OCI-LY7 (cell line): ENCODE measurements at regions of chr12 and their contacts with region 1.

Region 1: GRCh38 chr12:113221181-113221997 is at the start of gene TPCN1:
- DNase-seq: peak; percentile 100
- H3K4me3 ChIP-seq: peak within 1 kb of the TSS; percentile 100
- H3K27ac ChIP-seq: peak within 1 kb of the TSS; percentile 99
- H3K4me1 ChIP-seq: peaks cover 47% of the 10 kb centered on the region
- CTCF ChIP-seq: no peak
- total RNA-seq, gene TPCN1: 72.4 and 96.0 TPM in 2 replicates

Region 2: DNA sequence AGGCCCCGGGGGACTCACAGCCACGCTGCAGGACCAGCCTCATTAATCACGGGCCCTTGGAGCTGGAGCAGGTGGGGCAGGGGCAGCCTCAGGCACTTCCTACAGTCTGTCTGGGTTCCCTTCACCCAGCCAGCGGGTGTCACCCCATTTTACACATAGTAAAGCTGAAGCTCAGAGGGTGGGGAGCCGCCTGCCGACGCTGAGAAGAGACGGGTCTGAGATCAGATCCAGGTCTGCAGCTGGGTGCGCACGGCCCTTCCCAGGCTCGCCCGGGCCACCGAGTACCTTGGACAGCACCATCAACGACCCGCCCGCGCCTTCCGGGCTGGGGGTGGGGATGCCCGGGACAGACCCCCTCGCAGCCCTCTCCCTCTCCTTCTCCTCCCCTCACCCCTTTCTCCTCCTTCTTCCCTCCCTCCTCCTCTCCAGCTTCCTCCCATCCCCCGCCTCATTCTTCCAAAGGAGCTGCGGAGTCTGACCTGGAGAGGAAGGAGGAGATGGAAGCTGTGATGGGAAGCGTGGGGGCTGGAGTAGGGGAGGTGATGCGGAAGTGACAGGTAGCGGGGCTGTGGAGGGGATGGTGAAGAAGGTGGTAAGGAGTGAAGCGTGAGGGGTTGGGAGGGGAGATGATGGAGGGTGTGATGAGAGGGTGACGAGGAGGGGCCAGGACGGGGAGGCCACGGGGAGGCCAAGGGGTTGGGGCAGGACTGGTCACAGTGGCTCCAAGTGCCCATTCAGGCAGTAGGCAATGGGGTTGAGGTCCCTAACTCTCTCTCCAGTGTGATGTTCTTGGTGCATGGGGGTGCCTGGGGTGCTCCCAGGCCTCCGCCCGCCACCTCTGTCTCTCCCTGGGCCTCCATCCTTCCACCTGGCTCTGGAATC is 156.0 kb before region 1 on chr12:
- CTCF ChIA-PET with region 1: no interaction called
- POLR2A ChIA-PET with region 1: no interaction called
- intact Hi-C with region 1: loop called (anchors 5 kb)
- DNase-seq: peak; percentile 71
- H3K4me3 ChIP-seq: peak overlapping the region; percentile 90
- H3K27ac ChIP-seq: peak overlapping the region; percentile 97
- H3K4me1 ChIP-seq: peaks cover 100% of the 10 kb centered on the region
- CTCF ChIP-seq: no peak

Region 3: DNA sequence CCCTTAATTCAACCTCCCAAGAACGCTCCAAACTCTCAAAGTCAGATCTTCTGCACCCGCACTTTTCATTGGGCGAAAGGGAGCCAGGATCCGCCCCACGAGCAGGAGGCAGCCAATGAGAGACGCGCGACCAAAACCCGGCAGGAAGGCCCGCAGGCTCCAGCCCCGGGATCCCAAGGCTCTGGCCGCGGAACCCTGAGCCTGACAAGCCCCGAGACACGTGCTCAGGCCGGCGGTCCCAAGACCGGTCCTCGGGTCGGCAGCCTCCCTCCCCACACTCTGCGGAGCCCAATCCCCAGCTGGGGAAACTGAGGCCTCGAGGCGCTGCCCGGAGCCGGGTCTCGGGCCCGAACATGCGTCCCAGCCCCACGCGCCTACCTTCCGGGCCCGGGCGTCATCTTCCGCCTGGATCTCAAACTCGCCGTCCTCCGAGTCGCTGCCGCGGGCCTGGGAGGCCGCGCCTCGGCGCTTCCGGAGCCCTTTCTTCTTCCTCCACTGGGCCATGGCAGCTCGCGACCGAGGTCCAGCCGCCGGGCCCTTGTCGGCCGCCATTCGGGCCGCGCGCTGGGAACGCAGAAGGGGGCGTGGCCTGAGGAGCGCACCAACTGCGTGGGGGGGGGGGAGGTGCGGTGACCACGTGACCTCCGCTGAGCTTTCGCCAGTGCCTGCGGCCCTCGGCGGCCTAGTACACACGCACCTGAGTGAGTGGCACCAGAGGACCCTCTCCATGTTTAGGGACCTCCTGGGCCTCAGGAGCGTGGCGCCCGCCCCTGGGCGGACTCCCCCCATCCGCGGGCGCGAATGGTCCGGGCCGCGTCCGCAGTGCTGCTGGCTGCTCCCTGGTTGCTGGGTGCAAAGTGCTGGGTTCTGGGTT is 36.3 kb before region 1 on chr12 and contains the starts of genes DDX54 and RITA1:
- CTCF ChIA-PET with region 1: no interaction called
- POLR2A ChIA-PET with region 1: interaction called, 24 read pairs
- intact Hi-C with region 1: loop called (anchors 1 kb)
- DNase-seq: peak; percentile 95
- H3K4me3 ChIP-seq: peak within 1 kb of the TSS; percentile 92
- H3K27ac ChIP-seq: peak within 1 kb of the TSS; percentile 86
- H3K4me1 ChIP-seq: peaks cover 44% of the 10 kb centered on the region
- CTCF ChIP-seq: no peak
- total RNA-seq, gene DDX54: 86.0 and 87.2 TPM in 2 replicates
- total RNA-seq, gene RITA1: 72.5 and 90.8 TPM in 2 replicates

Region 4: DNA sequence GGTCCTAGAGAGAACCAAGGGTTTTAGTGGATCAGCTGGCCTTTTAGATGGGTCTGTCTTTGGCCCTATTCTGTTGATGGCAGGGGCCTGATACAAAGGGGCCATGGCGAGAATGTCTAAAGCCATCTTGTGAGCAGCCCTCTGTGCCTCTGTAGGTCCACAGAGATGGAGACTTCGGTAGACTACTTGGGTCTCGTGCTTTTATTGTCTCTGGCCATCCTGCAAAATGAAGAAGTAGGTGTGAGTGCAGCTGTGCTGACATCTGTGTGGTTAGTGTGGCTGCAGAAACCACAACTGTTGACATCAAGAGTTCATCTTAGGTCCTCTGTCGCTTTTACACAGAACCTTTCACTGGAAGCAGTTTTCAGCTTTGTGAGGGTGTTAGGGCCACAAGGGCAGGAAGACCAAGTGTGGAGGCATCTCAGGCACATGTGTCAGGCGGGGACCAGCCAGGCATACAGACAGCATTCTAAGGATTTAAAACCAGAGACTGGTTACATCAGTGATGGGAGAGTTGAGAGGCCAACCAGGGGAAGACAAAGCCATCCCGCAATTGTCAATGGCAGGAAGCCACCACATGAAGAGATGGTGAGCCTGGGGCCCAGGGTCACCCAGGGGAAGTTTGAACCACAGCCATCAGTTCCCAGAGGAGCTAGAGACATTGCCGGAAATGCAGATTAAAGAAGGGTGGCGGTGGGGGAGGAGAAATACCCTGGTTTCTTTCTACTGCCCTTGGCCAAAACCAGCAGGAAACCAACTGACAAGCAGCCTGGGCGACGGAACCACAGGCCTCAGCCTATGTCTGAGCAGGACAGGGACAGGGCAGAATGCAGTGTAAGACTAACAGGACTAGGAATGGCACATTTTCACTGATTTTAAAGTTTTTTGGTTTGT is 13.1 kb before region 1 on chr12:
- CTCF ChIA-PET with region 1: interaction called, 11 read pairs
- POLR2A ChIA-PET with region 1: interaction called, 183 read pairs
- intact Hi-C with region 1: loop called (anchors 1 kb)
- DNase-seq: peak; percentile 98
- H3K4me3 ChIP-seq: peak overlapping the region; percentile 59
- H3K27ac ChIP-seq: peak overlapping the region; percentile 99
- H3K4me1 ChIP-seq: peaks cover 91% of the 10 kb centered on the region
- CTCF ChIP-seq: no peak